Activated CD4-positive, alpha-beta memory T cell treated with anti-CD3 and anti-CD28 coated beads, Interleukin-2, amount 10 ng/mL, durations not matched to agents 7 days and 5 days (primary cell): ENCODE measurements at regions of chr2 and their contacts with region 1.

Region 1: DNA sequence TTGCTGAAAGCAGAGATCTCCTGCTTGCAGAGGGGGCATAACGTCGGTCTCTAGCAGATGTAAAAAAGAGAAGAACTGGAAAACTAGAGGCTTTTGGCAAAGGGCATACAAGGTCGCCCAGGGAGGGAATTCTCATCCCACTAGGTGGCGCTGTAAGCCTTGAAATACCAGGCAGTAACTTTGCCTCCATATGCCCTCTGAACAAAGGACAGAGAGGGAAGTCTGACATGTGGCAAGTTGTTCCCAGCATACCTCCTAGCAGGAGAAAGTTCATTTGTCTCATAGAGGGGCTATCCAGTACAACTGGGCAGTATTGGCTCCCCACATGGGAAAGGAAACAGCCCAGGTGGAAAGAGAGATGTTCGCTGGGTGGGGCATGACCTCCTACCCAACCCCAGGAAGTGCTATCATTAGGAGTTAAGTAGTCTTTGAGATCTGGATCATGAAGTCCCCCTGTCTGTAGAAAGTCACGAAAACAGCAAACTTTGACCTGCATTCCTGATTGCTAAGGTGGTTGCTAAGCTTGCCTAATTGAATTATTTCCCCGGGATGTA is 39.9 kb downstream of the STK17B start:
- DNase-seq: peak; percentile 74
- H3K4me3 Mint-ChIP-seq: no peak overlapping the region
- H3K27ac Mint-ChIP-seq: peak overlapping the region; percentile 75
- H3K4me1 Mint-ChIP-seq: peaks cover 26% of the 10 kb centered on the region
- H3K27me3 Mint-ChIP-seq: no peaks in the 10 kb centered on the region

Region 2: GRCh38 chr2:196036442-196036841 is 95.0 kb before region 1 on chr2:
- CTCF ChIA-PET with region 1: no interaction called
- POLR2A ChIA-PET with region 1: no interaction called
- DNase-seq: no peak
- H3K4me3 Mint-ChIP-seq: no peak overlapping the region
- H3K27ac Mint-ChIP-seq: no peak overlapping the region
- H3K4me1 Mint-ChIP-seq: no peaks in the 10 kb centered on the region
- H3K27me3 Mint-ChIP-seq: peaks cover 3% of the 10 kb centered on the region

Region 3: GRCh38 chr2:196143730-196144131 is 12.3 kb after region 1 on chr2:
- CTCF ChIA-PET with region 1: no interaction called
- POLR2A ChIA-PET with region 1: interaction called, 12 read pairs
- DNase-seq: no peak
- H3K4me3 Mint-ChIP-seq: no peak overlapping the region
- H3K27ac Mint-ChIP-seq: peak overlapping the region; percentile 53
- H3K4me1 Mint-ChIP-seq: peaks cover 62% of the 10 kb centered on the region
- H3K27me3 Mint-ChIP-seq: no peaks in the 10 kb centered on the region

Region 4: GRCh38 chr2:196361606-196362326 is 230.3 kb after region 1 on chr2:
- CTCF ChIA-PET with region 1: no interaction called
- POLR2A ChIA-PET with region 1: no interaction called
- DNase-seq: no peak
- H3K4me3 Mint-ChIP-seq: no peak overlapping the region
- H3K27ac Mint-ChIP-seq: no peak overlapping the region
- H3K4me1 Mint-ChIP-seq: peaks cover 18% of the 10 kb centered on the region
- H3K27me3 Mint-ChIP-seq: peaks cover 2% of the 10 kb centered on the region